Psoas muscle (tissue), 8 donors: ENCODE measurements at regions of chr6 and their contacts with region 1.

Region 1: DNA sequence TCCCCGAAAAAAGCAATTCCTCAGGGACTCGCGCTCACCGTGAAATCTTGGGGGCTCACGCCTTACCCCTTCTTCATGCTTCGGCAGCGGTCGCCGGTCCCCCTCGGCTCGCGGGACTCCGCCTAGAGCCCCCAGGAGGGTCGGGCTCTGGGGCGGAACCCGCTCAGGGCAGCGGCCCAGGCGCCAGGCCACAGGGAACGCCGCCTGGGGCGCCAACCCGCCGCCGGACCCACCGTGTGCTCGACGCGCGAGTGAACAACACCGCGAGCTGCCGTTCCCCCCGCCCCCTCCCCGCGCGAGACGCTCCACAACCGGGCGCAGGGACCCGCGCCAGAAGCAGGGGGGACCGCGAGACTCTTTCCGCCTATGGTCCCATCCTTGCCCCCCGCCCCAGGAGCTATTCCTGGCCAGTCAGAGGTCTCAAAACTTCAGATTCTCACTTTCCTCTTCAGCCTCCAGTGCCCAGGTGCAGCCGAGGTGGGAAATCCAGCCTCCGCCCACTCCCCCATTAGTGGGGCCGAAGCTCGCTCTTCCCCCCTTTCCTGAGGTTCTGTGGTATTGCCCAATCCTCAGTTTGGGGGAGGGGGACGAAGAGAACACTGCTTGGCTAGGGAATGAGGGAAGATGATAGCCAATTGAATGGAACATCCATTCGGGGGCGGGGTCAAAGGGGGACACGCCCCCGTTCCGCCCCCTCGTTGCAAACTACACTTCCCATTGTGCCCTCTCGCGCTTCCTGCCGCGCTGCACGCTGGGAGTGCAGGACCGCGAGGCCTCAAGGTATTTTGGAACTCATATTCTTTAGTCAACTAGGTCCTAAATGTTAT is at the start of gene WASF1:
- DNase-seq: peak; percentile 94 to 95
- ATAC-seq: peak; percentile 99 to 100 (median 100)
- H3K4me3 ChIP-seq: peak within 1 kb of the TSS; percentile 75
- H3K27ac ChIP-seq: peak within 1 kb of the TSS; percentile 89
- H3K4me1 ChIP-seq: peaks cover 32% of the 10 kb centered on the region
- H3K27me3 ChIP-seq: peaks cover 0 to 21% (median 0%) of the 10 kb centered on the region in 3 donors
- CTCF ChIP-seq: no peak
- total RNA-seq, gene WASF1: 0.47 to 1.1 (median 0.81) TPM

Region 2: DNA sequence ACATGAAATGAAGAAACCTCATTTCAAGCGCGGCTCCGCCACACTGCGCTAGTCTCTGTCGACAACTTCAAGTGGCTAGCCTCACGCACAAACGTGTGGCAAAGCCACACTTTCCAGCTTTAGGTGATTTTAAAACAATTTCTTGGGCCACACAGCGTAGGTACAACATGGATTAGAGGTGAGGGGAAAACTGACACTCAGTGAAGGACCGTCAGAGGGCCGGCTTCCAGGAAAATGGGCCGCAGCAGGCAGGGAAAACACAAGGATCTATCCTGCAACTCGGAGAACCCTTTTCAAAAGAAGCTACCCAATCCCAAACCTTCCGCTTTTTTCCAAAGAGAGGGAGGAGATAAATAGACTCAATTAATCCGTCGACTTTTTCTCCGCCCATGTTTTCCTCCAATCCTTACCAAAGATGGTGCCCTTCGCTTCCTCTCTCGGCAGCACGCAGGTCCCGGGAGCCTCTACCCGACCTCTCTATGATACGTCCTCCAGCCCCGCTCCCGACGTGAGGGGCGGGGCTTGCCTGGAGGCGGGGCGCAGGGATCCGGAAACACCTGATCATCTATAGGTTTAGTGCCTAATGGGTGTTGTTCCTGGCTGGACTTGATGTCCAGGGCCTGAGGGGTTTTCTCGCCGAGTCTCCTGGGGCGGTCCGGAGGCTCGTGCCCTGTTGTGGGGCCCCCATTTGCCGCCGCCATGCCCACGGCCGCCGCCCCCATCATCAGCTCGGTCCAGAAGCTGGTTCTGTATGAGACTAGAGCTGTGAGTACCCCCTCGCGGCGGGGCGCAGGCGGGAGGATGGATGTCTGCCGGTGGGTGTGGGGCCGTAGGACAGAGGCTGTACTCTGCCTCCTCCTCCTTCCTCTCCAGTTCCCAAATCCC is 488.6 kb before region 1 on chr6 and contains the starts of genes AK9 and FIG4:
- intact Hi-C with region 1: loop called in 1 of 2 experiments (anchors 5 kb)
- DNase-seq: peak; percentile 93 to 95
- ATAC-seq: peak; percentile 98 to 99 (median 99)
- H3K4me3 ChIP-seq: peak within 1 kb of the TSS; percentile 88
- H3K27ac ChIP-seq: peak within 1 kb of the TSS; percentile 92
- H3K4me1 ChIP-seq: peaks cover 26% of the 10 kb centered on the region
- H3K27me3 ChIP-seq: no peaks in the 10 kb centered on the region
- CTCF ChIP-seq: no peak
- total RNA-seq, gene AK9: 3.4 to 6.5 (median 5.4) TPM
- total RNA-seq, gene FIG4: 7.9 to 12.5 (median 11.2) TPM

Region 3: DNA sequence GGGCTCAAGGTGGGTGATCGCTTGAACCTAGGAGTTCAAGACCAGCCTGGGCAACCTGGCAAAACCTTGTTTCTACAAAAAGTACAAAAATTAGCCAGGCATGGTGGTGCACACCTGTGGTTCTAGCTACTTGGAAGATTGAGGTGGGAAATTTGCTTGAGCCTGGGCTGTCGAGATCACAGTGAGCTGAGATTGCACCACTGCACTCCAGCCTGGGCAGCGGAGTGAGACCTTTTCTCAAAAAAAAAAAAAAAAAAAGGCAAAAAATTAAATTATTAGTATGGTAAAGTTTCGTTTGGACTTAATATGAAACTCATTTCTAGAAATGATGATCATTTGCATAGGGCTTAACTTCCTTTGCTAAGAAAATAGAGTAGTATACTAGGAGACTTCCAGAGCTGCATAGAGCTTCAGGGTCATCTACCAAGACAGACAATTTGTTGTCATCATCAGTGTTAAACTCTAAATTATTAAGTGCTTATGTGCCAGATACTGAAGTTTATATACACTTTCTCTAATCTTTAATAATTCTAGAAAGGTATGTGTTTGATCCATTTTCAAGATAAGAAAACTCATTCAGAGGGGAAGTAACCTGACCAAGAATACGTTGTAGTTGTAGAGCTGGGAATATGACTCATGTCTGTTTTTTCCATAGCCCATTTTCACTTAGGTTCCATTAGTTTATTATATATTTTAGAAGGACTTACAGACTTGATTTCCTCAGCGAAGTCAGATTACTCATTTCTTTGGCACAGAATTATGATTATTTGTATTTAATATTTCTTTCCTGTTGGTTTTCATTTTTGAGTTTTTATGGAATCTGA is 992.2 kb after region 1 on chr6:
- intact Hi-C with region 1: no loop called
- DNase-seq: no peak
- ATAC-seq: peak in 2 of 4 donors; percentile 33 to 34
- H3K4me3 ChIP-seq: no peak overlapping the region
- H3K27ac ChIP-seq: no peak overlapping the region
- H3K4me1 ChIP-seq: peaks cover 12% of the 10 kb centered on the region
- H3K27me3 ChIP-seq: no peaks in the 10 kb centered on the region
- CTCF ChIP-seq: no peak